MCF 10A (cell line): ENCODE measurements at regions of chr2 and their contacts with region 1.

Region 1: DNA sequence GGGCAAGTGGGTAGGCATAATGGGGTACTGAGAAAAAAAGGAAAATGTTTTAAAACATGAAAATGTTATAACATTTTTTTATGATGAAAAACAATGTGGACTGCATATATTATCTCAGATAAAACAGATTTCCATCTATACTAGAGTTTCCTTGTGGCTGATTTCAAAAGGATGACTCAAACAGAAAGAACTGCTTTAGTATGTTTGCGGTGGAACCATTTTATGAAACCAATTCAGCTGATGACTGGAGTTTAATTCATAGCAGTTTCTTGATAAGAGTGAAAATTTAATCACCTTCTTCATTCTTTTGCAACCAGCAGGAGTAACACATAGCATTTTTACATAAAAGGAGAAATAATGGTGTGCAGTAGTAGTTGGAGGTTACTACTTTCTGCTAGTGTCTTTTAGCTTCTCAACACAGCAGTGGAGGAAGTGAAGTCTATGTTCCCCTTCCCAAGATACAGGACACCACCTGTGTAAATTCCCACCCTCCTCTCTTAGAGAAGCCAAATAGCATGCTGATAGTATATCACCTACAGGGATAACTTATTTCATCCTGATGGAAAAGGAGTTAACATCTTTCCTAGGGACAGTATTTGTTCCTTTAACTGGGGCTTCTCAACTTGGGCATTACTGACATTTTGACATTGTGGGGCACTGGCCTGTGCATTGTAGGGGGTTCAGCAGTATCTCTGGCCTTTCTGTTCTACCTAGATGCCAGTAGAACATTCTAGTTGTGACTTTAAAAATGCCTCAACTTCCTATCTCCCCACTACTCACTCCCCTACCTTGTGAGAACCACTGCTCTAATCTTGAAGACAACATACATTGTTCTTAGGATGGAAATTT is 29.9 kb downstream of the PELI1 start:
- DNase-seq: peak; percentile 38
- H3K4me3 Mint-ChIP-seq: peak overlapping the region; percentile 35
- H3K27ac Mint-ChIP-seq: peak overlapping the region; percentile 87
- H3K4me1 Mint-ChIP-seq: peaks cover 16% of the 10 kb centered on the region
- H3K27me3 Mint-ChIP-seq: no peaks in the 10 kb centered on the region
- CTCF ChIP-seq: no peak

Region 2: GRCh38 chr2:64062829-64063228 is 51.5 kb before region 1 on chr2:
- CTCF ChIA-PET with region 1: no interaction called
- POLR2A ChIA-PET with region 1: interaction called, 4 read pairs
- intact Hi-C with region 1: loop called (anchors 10 kb)
- DNase-seq: peak; percentile 91
- H3K4me3 Mint-ChIP-seq: no peak overlapping the region
- H3K27ac Mint-ChIP-seq: peak overlapping the region; percentile 33
- H3K4me1 Mint-ChIP-seq: peaks cover 38% of the 10 kb centered on the region
- H3K27me3 Mint-ChIP-seq: no peaks in the 10 kb centered on the region
- CTCF ChIP-seq: no peak

Region 3: DNA sequence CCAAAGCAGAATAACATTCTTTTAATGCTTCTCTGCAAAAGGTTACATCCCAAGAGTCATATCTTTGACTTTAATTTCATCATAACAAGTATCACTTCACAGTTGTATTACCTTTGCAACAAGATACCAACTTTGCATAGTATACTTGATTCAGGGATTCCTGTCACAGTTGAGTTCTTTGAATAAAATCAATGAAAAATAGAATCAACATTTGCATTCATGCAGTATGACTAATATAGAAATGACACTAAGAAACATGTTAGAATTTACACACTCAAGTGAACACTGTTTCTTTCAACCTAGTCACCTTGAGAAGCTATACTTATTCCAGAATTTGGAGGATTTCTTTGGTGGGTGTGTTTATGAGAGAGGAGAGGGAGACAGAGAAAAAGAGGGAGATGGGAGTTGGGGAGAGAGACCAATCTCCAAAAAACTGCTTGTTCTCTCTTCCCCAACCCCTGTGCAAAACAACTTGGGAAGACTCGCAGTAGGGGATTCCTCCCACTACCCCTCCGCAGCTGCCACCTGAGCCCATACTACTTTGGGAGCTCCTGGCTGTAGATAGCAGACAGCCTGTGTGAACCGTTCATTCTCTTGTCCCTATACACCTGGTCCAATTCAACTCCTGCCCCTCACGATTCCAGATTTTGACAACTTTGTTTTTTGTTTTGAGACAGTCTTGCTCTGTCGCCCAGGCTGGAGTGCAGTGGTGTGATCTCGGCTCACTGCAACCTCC is 27.8 kb before region 1 on chr2:
- CTCF ChIA-PET with region 1: no interaction called
- POLR2A ChIA-PET with region 1: no interaction called
- intact Hi-C with region 1: no loop called
- DNase-seq: no peak
- H3K4me3 Mint-ChIP-seq: no peak overlapping the region
- H3K27ac Mint-ChIP-seq: no peak overlapping the region
- H3K4me1 Mint-ChIP-seq: no peaks in the 10 kb centered on the region
- H3K27me3 Mint-ChIP-seq: no peaks in the 10 kb centered on the region
- CTCF ChIP-seq: no peak

Region 4: DNA sequence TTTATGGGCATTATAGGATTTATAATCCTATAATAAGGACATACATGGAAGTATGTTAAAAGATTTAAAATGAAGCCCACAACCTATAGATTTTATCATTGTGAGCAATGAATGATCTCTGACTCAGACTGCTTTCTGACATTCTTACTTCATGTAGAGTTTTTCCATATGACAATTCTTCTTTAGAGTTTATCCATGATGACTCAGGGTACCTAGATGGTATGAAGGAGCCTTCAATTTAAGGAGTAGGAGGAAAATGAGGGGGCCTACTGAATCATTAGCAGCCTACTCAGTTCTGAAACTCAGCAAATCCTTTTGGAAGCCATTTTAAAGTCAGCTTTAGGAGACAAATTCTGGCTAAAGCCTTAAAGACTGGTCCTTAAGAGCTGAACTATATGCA is 19.5 kb after region 1 on chr2:
- CTCF ChIA-PET with region 1: interaction called, 4 read pairs
- POLR2A ChIA-PET with region 1: interaction called, 11 read pairs
- intact Hi-C with region 1: no loop called
- DNase-seq: peak; percentile 44
- H3K4me3 Mint-ChIP-seq: no peak overlapping the region
- H3K27ac Mint-ChIP-seq: peak overlapping the region; percentile 29
- H3K4me1 Mint-ChIP-seq: peaks cover 61% of the 10 kb centered on the region
- H3K27me3 Mint-ChIP-seq: no peaks in the 10 kb centered on the region
- CTCF ChIP-seq: no peak

Region 5: GRCh38 chr2:64228126-64228678 is 113.9 kb after region 1 on chr2:
- CTCF ChIA-PET with region 1: no interaction called
- POLR2A ChIA-PET with region 1: no interaction called
- intact Hi-C with region 1: no loop called
- DNase-seq: peak; percentile 38
- H3K4me3 Mint-ChIP-seq: peak overlapping the region; percentile 67
- H3K27ac Mint-ChIP-seq: peak overlapping the region; percentile 8
- H3K4me1 Mint-ChIP-seq: peaks cover 26% of the 10 kb centered on the region
- H3K27me3 Mint-ChIP-seq: no peaks in the 10 kb centered on the region
- CTCF ChIP-seq: no peak